A549 (cell line): ENCODE measurements at regions of chr16 and their contacts with region 1.

Region 1: DNA sequence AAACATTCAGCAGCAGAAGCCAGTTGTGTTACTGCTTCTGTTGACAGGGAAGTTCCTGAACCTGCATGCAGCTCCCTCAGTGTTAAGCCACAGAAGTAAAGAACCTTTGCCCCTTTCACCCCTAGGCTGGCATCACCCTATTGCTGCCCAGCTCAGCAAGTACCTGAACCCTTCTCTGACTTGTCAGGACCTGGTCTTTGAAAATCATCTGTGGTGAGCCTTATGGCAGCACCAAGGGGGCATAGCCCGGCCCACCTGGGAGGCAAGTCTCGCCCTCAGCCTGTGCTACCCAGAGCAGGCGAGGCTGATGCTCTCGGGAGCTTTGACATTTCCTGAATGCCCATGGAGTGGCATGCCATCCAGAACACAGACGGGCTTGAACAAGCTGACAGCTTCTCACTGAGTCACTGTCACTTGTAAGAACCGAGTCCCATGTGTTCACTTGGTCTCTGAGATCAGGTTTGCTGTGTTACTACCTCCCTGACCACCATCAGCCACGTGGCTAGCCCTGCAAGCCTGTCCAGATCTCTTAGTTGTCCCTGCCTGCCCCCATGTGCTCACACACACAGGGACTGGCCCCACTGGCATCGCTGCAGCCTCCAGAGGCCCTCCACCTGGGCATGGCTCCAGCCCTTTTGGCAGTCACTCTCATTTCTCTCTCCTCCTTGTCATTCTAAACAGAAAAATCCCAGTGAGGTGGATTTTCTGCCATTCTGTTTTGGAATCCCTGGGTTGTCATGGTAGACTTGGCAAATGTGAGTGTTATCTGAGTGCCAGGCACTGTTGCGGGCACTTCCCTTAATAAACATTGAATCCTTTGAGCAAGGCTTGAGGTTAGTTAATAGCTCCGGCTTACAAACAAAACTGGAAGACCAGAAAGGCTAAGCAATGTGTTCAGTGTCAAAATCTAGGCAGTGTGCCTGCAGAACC is 2.9 kb upstream of the CARMIL2 start:
- DNase-seq: no peak
- ATAC-seq: peak; percentile 20 to 22; a peak in 2 of 6 replicates
- H3K4me3 ChIP-seq: no peak overlapping the region
- H3K27ac ChIP-seq: no peak overlapping the region
- H3K4me1 ChIP-seq: 0 out of 3 replicates have a peak, but pooled peaks cover 3% of the 10 kb centered on the region
- CTCF ChIP-seq: no peak
- EP300 ChIP-seq: no peak
- POLR2A ChIP-seq: no peak
- RAD21 ChIP-seq: no peak

Region 2: DNA sequence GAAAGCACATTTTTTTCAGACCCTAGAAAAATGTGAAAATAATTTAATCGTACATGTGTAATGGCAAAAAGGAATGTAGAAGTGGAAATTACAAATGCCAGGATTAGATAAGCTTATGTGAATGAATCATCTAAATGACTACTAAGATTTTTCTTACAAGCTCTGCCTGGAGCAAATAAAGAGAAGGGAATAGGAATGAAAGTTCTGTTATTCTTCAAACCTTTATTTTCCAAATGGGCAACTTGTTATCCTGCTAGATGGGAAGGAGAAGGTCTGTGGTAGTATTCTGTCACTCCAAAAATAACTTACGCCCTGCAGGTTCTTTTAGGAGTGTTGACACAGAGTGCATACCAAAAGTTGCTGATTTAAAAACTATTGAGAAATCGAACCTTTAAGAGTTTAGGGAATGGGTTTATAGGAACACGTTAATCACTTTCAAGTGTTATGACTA is 70.0 kb before region 1 on chr16:
- CTCF ChIA-PET with region 1: interaction called, 12 read pairs
- POLR2A ChIA-PET with region 1: no interaction called
- DNase-seq: no peak
- ATAC-seq: no peak
- H3K4me3 ChIP-seq: no peak overlapping the region
- H3K27ac ChIP-seq: no peak overlapping the region
- H3K4me1 ChIP-seq: peaks cover 9% of the 10 kb centered on the region
- CTCF ChIP-seq: no peak
- EP300 ChIP-seq: no peak
- POLR2A ChIP-seq: no peak
- RAD21 ChIP-seq: no peak

Region 3: DNA sequence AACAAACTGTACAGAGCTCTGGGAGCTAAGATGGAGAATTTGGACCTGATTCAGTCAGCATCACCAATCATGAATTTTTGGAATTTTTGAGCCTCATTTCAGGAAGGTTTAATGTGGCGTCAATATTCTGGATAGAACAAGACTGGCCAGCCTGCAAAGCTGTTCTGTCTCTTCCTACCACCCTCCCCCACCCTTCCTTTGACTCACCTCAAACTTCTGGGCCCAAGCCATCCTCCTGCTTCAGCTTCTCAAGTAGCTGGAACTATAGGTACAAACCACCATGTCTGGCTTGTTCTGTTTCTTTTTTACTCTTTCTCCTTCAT is 47.0 kb before region 1 on chr16:
- CTCF ChIA-PET with region 1: interaction called, 35 read pairs
- POLR2A ChIA-PET with region 1: no interaction called
- DNase-seq: no peak
- ATAC-seq: peak; percentile 50 to 54; a peak in 3 of 6 replicates
- H3K4me3 ChIP-seq: no peak overlapping the region
- H3K27ac ChIP-seq: no peak overlapping the region; a peak in 1 of 6 replicates
- H3K4me1 ChIP-seq: peaks cover 9% of the 10 kb centered on the region; the same call in 1 of the 3 replicates
- CTCF ChIP-seq: no peak
- EP300 ChIP-seq: no peak
- POLR2A ChIP-seq: no peak
- RAD21 ChIP-seq: no peak

Region 4: GRCh38 chr16:67660564-67661028 is 18.6 kb after region 1 on chr16 and contains the start of gene PARD6A:
- CTCF ChIA-PET with region 1: interaction called, 51 read pairs
- POLR2A ChIA-PET with region 1: interaction called, 3 read pairs
- DNase-seq: peak; percentile 96 to 99
- ATAC-seq: peak; percentile 66 to 81
- H3K4me3 ChIP-seq: peak within 1 kb of the TSS; percentile 91
- H3K27ac ChIP-seq: peak within 1 kb of the TSS; percentile 90 to 92
- H3K4me1 ChIP-seq: peaks cover 8% of the 10 kb centered on the region
- CTCF ChIP-seq: no peak
- EP300 ChIP-seq: no peak
- POLR2A ChIP-seq: no peak
- RAD21 ChIP-seq: no peak
- polyA plus RNA-seq, gene PARD6A: 1.7 and 1.8 TPM in 2 replicates

Region 5: GRCh38 chr16:67672739-67673662 is 31.0 kb after region 1 on chr16:
- CTCF ChIA-PET with region 1: interaction called, 11 read pairs
- POLR2A ChIA-PET with region 1: interaction called, 3 read pairs
- DNase-seq: peak; percentile 58 to 84
- ATAC-seq: peak; percentile 57 to 65
- H3K4me3 ChIP-seq: no peak overlapping the region
- H3K27ac ChIP-seq: no peak overlapping the region
- H3K4me1 ChIP-seq: peaks cover 3% of the 10 kb centered on the region; the same call in 1 of the 3 replicates
- CTCF ChIP-seq: peak; percentile 64
- EP300 ChIP-seq: no peak
- POLR2A ChIP-seq: no peak
- RAD21 ChIP-seq: peak; percentile 73 to 83